Ascending aorta (tissue), 2 donors: ENCODE measurements at regions of chr5 and their contacts with region 1.

Region 1: GRCh38 chr5:163505368-163506094 is at the start of gene MAT2B:
- DNase-seq: peak; percentile 77 to 97
- H3K4me3 ChIP-seq: peak within 1 kb of the TSS; percentile 83 to 93
- H3K27ac ChIP-seq: peak within 1 kb of the TSS; percentile 97 to 99
- H3K4me1 ChIP-seq: peaks cover 7 to 26% of the 10 kb centered on the region in 2 donors
- H3K27me3 ChIP-seq: no peaks in the 10 kb centered on the region
- CTCF ChIP-seq: peak; percentile 20 to 63 (median 45)
- total RNA-seq, gene MAT2B: 21.8 TPM

Region 2: DNA sequence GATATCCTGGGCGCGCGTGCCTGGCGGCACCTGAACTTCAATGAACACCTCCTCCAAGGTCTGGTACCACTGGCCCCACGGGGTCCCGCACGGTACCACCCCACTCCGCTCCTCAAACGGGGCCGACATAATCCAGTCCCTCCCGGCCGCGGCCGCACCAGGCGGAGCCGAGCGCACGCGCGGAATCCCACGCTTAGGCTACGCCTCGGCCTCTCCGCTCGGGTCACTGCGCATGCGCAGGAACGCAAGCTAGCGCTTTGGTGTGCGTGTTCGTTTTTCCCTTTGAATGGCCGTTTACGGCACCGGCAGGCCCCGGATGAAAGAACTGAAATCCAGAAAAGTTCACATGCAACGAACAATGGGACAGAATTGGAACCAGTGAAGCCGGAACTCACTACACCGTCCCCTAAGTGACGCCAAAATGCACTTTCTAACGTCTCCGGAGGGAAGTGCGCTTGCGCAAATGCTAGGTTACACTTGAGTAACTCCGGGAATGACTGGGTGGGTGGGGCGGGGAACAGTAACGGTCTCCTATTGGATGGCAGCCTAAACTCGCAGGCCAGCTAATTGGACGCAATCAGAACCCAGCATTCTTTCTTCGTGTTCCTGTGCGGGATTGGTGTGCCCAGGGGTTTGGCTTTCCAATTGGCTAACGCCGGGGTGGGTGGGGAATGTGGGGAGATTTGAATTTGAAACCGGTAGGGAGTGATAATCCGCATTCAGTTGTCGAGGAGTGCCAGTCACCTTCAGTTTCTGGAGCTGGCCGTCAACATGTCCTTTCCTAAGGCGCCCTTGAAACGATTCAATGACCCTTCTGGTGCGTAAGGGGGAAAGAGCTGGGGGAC is 45.4 kb before region 1 on chr5 and contains the starts of genes HMMR and NUDCD2:
- intact Hi-C with region 1: loop called (anchors 1 kb)
- DNase-seq: peak; percentile 89 to 97
- H3K4me3 ChIP-seq: peak within 1 kb of the TSS; percentile 72 to 79
- H3K27ac ChIP-seq: peak within 1 kb of the TSS; percentile 83 to 96
- H3K4me1 ChIP-seq: peaks cover 0 to 7% of the 10 kb centered on the region in 2 donors
- H3K27me3 ChIP-seq: no peaks in the 10 kb centered on the region
- CTCF ChIP-seq: no peak
- total RNA-seq, gene HMMR: not detected
- total RNA-seq, gene NUDCD2: 4.6 TPM

Region 3: DNA sequence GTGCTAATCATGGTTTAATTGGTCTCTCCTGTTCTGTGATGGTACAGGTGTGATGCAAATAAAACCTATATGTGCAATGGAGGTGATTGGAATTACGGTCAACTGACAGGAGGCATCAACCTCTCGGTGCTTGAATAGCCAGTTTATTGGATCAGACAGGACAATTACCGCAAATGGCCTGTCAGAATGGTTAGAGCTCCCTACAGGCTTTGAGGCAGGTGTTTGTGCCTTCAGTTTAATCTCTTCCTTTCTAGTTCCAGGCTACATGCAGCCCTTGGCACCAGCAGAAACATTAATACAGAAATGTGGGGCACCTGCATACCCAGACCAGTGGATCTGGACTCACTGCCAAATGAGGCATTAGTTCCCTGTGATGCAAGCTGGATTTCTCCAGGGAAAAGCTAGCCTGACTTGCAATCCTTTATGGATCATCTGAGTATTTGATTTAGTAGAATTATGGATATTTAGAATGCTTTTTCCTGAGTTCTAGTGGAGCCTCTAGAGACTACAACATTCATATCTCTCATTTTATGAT is 128.5 kb after region 1 on chr5:
- intact Hi-C with region 1: no loop called
- DNase-seq: no peak
- H3K4me3 ChIP-seq: no peak overlapping the region
- H3K27ac ChIP-seq: no peak overlapping the region
- H3K4me1 ChIP-seq: no peaks in the 10 kb centered on the region
- H3K27me3 ChIP-seq: no peaks in the 10 kb centered on the region
- CTCF ChIP-seq: no peak